Spleen (tissue), 13 donors: ENCODE measurements at regions of chr7 and their contacts with region 1.

Region 1: DNA sequence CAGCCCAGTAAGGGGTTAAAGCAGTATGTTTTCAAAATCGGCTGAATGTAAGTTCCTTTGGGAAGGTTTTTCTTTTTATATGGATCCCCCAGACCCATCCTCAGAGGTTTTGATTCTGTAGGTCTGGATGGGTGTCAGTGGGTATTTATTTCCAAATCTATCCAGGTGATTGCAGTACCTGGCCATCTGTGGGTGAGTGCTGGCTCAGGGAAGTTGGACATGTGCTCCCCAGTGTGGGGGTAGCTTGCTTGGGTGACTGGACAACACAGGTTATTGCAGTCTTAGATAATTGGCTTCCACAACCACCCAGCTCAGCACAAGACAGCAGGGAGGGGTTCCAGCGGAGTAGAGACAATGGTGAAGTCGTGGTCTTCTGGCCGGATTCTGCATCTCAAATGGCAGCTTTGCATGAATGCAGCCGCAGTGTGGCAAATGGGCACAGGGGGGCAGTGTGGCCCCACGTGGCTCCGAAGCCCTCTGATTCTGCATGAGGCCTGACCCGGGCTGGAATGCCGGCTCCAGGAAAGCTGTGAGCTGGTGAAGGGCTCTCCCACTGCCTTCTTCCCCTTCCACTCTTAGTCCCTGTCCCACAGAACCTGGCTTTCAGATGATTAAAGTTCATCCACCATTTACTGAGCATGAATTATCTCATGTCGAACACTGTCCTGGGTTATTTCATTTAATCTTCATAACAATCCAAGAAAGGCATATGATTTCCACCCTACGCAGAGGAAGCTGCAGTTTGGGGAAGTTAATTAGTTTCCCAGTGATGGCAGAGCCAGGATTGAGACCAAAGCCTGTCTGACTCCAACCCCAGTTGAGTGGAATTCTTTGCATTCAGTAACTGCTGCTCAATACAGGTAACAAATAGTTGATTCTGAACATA is 64.5 kb upstream of the SYPL1 start:
- DNase-seq: peak; percentile 91
- H3K4me3 ChIP-seq: no peak overlapping the region
- H3K27ac ChIP-seq: peak overlapping the region in 1 of 8 donors; percentile 40
- H3K4me1 ChIP-seq: peaks cover 0 to 25% (median 11%) of the 10 kb centered on the region in 6 donors
- H3K27me3 ChIP-seq: peaks cover 0 to 12% (median 0%) of the 10 kb centered on the region in 7 donors
- CTCF ChIP-seq: peak; percentile 85 to 96 (median 93)
- POLR2A ChIP-seq: no peak

Region 2: GRCh38 chr7:106064771-106065585 is 111.7 kb before region 1 on chr7:
- intact Hi-C with region 1: no loop called
- DNase-seq: peak; percentile 83
- H3K4me3 ChIP-seq: peak overlapping the region in 3 of 8 donors; percentile 1 to 19 (median 8)
- H3K27ac ChIP-seq: peak overlapping the region in 6 of 8 donors; percentile 48 to 86 (median 67)
- H3K4me1 ChIP-seq: peaks cover 30 to 99% (median 78%) of the 10 kb centered on the region in 6 donors
- H3K27me3 ChIP-seq: no peaks in the 10 kb centered on the region
- CTCF ChIP-seq: no peak
- POLR2A ChIP-seq: no peak

Region 3: GRCh38 chr7:106461993-106462859 is 285.6 kb after region 1 on chr7:
- intact Hi-C with region 1: loop called (anchors 2 kb)
- DNase-seq: no peak
- H3K4me3 ChIP-seq: no peak overlapping the region
- H3K27ac ChIP-seq: peak overlapping the region in 5 of 8 donors; percentile 2 to 63 (median 20)
- H3K4me1 ChIP-seq: peaks cover 0 to 39% (median 26%) of the 10 kb centered on the region in 6 donors
- H3K27me3 ChIP-seq: no peaks in the 10 kb centered on the region
- CTCF ChIP-seq: peak; percentile 48 to 81 (median 64)
- POLR2A ChIP-seq: no peak